Aorta (tissue), 5 donors: ENCODE measurements at regions of chr16 and their contacts with region 1.

Region 1: DNA sequence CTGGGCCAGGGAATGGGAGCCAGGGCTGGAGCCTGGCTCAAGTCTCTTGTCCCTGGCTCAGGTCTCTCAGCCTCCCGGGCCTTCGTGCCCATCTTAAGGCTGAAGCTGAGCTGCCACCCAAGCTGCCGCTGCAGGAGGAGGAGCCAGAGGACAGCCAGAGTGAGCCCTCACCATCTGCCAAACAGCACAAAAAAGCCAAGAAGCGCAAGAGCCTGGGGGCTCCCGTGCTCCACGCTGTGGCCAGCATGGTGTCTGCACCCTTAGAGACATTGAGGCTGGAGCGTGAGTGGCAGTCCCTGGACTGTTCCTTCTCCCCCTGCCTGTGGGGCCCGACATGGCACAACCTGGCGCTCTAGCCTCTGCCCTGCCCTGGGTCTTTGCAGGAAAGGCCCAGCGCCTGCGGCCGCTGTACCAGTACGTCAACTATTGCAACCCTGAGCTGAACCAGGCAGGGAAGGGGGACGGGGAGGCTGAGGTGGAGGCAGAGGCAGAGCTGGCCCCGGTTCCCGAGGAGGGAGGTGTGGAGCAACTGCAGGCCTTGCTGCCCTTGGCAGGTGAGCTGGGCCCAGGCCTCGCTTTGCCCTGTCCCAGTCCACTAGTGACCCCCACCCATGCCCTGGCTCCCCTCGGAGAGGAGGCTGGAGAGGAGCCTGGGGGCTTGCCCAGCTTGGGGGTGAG is 1.3 kb downstream of the C16orf86 start:
- DNase-seq: peak; percentile 92 to 93
- ATAC-seq: peak; percentile 87
- H3K4me3 ChIP-seq: no peak overlapping the region
- H3K27ac ChIP-seq: peak overlapping the region in 1 of 2 donors; percentile 4
- H3K4me1 ChIP-seq: no peaks in the 10 kb centered on the region
- H3K27me3 ChIP-seq: no peaks in the 10 kb centered on the region

Region 2: DNA sequence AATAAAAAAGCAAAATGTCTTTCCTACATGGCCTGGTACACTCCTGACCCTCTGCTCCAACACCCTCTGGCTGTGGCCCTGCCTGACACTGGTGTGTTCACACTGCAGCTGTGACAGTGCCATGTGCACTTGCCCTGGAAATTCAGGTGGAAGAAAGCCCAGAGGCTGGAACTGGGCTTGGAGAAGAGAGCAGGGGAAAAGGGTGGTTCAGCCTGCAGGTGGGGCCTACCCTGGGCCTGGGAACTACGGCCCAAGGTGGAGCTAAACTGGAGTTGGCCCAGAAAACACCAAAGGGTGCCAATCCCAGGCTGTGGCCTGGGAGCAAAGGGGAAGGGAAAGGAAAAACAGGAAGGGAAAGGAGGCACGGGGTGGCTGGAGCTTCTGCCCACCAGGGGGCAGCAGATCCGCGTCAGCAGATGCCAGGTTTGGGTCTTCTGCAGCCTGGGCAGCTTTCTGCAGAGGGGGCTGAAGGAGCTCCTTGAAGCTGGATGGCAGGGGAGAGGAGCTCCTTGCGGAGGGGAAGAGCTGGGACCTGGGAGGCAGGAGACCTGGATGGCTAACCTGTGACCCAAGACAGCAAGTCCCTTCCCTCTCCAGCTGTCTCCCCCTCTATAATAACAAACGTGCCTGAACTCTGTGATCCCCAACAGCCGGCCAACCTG is 121.1 kb before region 1 on chr16:
- intact Hi-C with region 1: loop called in 1 of 2 experiments (anchors 5 kb)
- DNase-seq: peak; percentile 76 to 93
- ATAC-seq: peak; percentile 67
- H3K4me3 ChIP-seq: no peak overlapping the region
- H3K27ac ChIP-seq: no peak overlapping the region
- H3K4me1 ChIP-seq: no peaks in the 10 kb centered on the region
- H3K27me3 ChIP-seq: no peaks in the 10 kb centered on the region

Region 3: DNA sequence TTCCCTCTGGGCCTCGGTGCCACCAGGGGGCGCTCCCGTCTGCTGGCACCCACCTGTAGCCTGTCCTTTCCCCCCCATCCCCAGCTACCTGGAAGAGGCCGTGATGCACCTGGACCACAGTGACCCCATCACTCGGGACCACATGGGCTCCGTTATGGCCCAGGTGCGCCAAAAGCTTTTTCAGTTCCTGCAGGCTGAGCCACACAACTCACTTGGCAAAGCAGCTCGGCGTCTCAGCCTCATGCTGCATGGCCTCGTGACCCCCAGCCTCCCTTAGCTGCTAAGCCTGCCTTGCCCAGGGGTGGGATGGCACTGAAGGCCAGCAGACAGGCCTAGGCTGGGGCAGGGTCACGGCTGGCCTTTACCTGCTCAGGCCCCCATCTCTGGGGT is 215.9 kb after region 1 on chr16:
- intact Hi-C with region 1: no loop called
- DNase-seq: peak; percentile 70 to 89
- ATAC-seq: peak; percentile 62
- H3K4me3 ChIP-seq: no peak overlapping the region
- H3K27ac ChIP-seq: peak overlapping the region in 1 of 2 donors; percentile 6
- H3K4me1 ChIP-seq: no peaks in the 10 kb centered on the region
- H3K27me3 ChIP-seq: no peaks in the 10 kb centered on the region